ENCODE measurements at regions of chr5 and their contacts with region 1.

Region 1: GRCh38 chr5:165457859-165458481 is 1952.6 kb downstream of the MAT2B start:
- DNase-seq: no peak
- ATAC-seq: no peak
- H3K4me3 ChIP-seq: no peak overlapping the region
- H3K4me3 Mint-ChIP-seq: no peak overlapping the region
- H3K27ac ChIP-seq: no peak overlapping the region
- H3K27ac Mint-ChIP-seq: no peak overlapping the region
- H3K4me1 ChIP-seq: no peaks in the 10 kb centered on the region
- H3K4me1 Mint-ChIP-seq: no peaks in the 10 kb centered on the region
- H3K27me3 ChIP-seq: no peaks in the 10 kb centered on the region
- H3K27me3 Mint-ChIP-seq: no peaks in the 10 kb centered on the region

Region 2: DNA sequence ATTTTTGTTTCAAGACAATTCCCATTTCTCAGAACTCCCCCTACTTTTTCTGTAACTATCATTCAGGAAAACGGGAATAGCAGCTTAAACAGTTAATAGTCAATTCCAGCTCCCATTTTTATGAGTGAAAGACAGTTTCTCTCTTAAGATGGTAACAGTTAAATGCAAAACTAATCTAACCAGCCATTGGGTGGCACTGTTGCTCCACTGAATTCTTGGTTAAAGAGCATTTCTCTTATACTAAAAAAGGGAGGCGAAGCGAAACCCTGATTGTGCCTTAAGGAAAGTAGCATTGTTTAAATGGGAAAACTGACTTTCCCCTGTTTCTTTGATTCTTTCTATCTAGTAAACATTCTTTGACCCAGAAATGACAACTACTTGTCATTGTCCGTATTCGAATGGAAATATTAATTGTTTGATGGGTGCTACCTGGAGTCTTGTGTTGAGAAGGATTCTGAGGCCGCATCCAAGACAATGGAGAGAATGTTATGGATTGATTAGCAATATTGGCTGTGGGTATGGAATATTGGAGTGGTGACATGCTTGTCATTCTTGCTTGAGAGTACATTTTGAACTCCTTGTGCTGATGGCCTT is 1444.8 kb before region 1 on chr5:
- CTCF ChIA-PET with region 1: no interaction called
- POLR2A ChIA-PET with region 1: no interaction called
- intact Hi-C with region 1: loop called in 1 of 2 experiments (anchors 5 kb)
- DNase-seq: peak in 1 of 9 donors; percentile 22
- ATAC-seq: peak; percentile 41
- H3K4me3 ChIP-seq: no peak overlapping the region
- H3K4me3 Mint-ChIP-seq: no peak overlapping the region
- H3K27ac ChIP-seq: no peak overlapping the region
- H3K27ac Mint-ChIP-seq: no peak overlapping the region
- H3K4me1 ChIP-seq: no peaks in the 10 kb centered on the region
- H3K4me1 Mint-ChIP-seq: peaks cover 0 to 3% (median 0%) of the 10 kb centered on the region in 7 donors
- H3K27me3 ChIP-seq: no peaks in the 10 kb centered on the region
- H3K27me3 Mint-ChIP-seq: no peaks in the 10 kb centered on the region